ENCODE measurements at regions of chr22 and their contacts with region 1.

Region 1: DNA sequence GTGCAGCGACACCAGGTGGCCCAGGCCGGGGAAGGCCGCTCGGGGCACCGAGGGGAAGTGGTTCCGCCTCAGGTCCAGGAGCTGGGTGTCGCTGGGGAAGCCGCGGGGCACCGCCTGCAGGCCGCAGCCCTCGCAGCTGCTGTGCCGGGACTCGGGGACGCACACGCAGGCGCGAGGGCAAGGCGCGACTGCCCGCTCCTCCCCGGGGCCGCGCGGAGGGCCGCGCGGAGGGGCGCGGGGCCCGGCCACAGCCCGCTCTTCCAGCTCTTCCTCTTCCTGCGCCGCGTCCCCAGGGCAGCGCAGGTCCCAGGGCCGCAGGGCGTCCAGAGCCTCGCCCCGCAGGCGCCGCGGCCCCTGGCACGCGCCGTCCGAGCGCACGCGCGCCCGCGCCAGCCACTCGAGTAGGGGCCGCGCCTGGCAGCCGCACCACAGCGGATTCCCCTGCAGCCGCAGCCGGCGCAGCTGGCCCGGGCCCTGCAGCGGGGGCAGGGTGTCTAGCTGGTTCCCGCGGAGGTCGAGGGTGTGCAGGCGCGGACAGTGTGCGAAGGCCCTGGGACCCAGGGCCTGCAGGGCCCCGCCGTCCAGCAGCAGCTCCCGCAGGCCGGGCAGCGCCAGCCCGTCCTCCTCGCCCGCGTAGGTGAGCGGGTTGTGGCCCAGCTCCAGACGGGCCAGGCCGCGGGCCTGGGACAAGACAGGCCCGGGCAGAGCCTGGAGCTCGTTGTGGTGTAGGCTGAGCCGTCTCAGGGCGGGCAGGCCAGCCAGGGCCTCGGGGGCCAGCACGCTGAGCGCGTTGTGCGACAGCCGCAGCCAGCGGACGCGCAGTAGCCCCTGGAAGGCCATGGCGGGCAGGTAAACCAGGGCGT is 2.8 kb downstream of the CHADL start:
- DNase-seq: peak; percentile 67 to 78 (median 68)
- H3K4me3 ChIP-seq: peak overlapping the region; percentile 9 to 67 (median 13)
- H3K4me3 Mint-ChIP-seq: peak overlapping the region; percentile 69 to 75
- H3K27ac ChIP-seq: no peak overlapping the region
- H3K27ac Mint-ChIP-seq: no peak overlapping the region
- H3K4me1 ChIP-seq: peaks cover 6 to 14% of the 10 kb centered on the region in 2 donors
- H3K4me1 Mint-ChIP-seq: peaks cover 3% of the 10 kb centered on the region
- H3K27me3 ChIP-seq: no peaks in the 10 kb centered on the region
- H3K27me3 Mint-ChIP-seq: peaks cover 2 to 10% (median 6%) of the 10 kb centered on the region in 3 donors
- CTCF ChIP-seq: peak; percentile 2

Region 2: DNA sequence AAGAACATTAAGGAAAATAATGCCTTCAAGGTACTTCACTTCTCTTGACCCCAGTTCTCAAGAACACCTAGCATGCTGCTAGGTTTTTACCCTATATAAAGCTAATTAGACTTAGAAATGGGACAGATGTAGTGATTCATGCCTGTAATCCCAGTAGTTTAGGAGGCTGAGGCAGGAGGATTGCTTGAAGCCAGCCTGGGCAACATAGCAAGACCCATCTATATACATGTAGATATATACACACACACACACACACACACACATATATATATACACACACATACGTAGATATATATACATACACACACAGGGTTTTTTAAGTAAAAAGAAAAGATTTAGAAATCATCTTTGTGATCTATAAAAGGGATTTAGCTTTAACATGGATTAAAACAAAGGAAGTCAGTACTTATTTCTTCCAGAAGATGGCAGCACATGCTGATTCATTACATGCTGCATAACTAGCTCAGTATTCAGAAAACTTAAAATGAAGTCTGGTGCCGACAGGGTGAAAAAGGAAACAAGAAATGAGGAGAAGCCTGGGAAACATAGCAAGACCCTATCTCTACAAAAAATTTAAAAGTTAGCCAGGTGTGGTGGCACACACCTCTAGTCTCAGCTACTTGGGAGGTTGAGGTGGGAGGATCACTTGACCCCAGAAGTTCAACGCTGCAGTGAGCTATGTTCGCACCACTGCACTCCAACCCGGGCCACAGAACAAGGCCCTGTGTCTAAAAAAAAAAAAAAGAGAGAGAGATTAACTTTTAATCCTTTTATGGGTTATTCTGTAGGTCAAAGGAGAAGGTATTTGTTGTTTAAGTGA is 315.2 kb before region 1 on chr22:
- intact Hi-C with region 1: loop called in 1 of 2 experiments (anchors 10 kb)
- DNase-seq: peak; percentile 56 to 79 (median 68)
- H3K4me3 ChIP-seq: peak overlapping the region in 1 of 3 experiments; percentile 56
- H3K4me3 Mint-ChIP-seq: peak overlapping the region; percentile 67 to 84
- H3K27ac ChIP-seq: peak overlapping the region in 1 of 2 donors; percentile 51
- H3K27ac Mint-ChIP-seq: peak overlapping the region in 5 of 7 donors; percentile 43 to 82 (median 57)
- H3K4me1 ChIP-seq: peaks cover 0 to 3% of the 10 kb centered on the region in 2 donors
- H3K4me1 Mint-ChIP-seq: peaks cover 8% of the 10 kb centered on the region
- H3K27me3 ChIP-seq: no peaks in the 10 kb centered on the region
- H3K27me3 Mint-ChIP-seq: no peaks in the 10 kb centered on the region
- CTCF ChIP-seq: peak; percentile 80